ENCODE measurements at regions of chr12 and their contacts with region 1.

Region 1: DNA sequence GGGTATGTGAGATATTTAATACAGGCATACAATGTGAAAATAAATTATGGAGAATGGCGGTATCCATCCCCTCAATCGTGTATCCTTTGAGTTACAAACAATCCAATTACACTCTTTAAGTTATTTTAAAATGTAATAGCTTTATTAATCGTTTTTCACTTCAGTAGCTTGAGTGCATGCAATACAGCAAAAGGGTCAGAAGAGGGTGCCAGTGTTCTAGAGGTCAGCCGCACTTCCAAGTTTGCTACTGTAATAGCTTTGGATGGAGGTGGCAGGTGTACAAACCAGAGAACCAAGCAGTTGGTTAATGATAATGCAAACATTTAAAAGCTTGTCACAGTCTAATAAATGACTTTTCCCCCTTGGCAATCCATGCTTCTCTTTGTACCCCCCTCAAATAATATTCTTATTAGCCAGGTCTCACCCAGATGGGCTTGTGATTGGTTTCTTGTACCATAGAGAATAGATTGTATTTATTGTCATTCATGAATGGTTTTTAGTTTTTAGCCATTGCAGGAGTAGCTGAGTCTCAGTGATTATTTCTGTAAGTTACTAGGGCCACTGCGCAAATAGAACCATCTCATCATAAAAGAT is 127.0 kb downstream of the ERC1 start:
- DNase-seq: peak; percentile 31
- CTCF ChIP-seq: peak; percentile 84

Region 2: DNA sequence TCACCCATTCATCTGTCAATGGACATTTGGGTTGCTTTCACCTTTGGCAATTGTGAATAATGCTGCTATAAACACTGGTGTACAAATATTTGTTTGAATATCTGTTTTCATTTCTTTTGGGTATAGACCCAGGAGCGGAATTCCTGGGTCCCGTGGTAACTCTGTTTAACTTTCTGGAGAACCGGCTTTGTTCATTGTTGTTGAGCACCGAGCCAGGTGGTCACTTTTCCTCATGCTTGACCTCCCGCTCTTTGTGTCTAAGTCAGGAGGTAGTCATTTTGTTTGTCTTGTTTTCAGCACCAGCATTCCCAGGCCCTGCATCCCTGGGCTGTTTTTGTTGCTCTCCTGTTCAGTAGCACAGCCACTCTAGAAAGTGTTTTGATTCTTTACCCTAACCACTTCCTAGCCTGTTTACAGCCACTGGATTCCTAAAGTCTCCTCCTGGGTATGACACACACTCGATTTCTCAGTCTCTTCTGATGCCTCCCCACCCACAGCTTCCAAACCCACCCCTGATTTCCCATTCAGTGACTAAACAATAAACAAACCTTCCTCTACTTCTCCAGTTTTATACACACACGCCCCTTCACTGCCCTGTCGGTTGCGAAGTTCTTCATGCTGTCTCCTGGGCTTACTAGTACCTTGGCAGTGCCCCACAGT is 620.4 kb before region 1 on chr12:
- CTCF ChIA-PET with region 1: no interaction called
- POLR2A ChIA-PET with region 1: no interaction called
- DNase-seq: no peak
- CTCF ChIP-seq: no peak

Region 3: DNA sequence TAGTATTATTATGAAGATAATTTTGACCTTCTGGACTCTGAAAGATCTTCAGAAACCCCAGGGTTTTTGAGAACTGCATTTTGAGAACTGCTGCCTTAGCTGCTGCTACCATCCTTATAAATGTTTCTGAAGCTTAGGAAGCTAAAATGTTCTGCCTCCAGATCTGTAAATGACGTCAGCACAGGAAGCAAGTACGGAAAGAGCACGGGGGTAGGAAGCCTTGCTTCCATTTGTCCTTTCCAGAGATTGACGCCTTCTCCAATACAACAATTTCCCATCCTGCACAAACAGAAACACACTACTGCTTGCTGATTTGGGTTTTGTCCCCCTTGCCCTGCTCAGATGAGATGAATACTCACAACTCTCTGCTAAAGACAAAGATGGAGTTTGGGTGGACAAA is 186.5 kb before region 1 on chr12:
- CTCF ChIA-PET with region 1: no interaction called
- POLR2A ChIA-PET with region 1: no interaction called
- DNase-seq: no peak
- CTCF ChIP-seq: no peak

Region 4: DNA sequence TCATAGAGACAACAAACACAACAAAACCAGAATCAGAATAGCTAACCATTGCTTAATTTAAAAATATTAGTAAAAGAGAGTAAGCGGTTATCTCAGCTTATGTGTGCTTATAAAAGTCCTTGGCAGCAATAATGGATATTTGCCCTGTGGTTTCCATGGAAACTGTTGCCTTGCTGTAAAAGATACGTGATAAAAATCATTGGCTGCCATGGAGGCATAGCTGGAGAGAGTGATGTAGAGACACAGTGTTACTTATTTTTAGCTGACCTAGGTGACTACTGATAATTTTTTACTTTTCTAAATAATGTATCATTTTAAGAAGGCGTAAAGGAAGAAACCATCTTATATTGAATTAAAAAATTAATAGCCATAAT is 34.2 kb before region 1 on chr12:
- CTCF ChIA-PET with region 1: interaction called, 12 read pairs
- POLR2A ChIA-PET with region 1: no interaction called
- DNase-seq: no peak
- CTCF ChIP-seq: no peak

Region 5: GRCh38 chr12:1138691-1139090 is 20.6 kb after region 1 on chr12:
- CTCF ChIA-PET with region 1: interaction called, 14 read pairs
- POLR2A ChIA-PET with region 1: no interaction called
- DNase-seq: no peak
- CTCF ChIP-seq: no peak

Region 6: GRCh38 chr12:1544996-1545700 is 427.1 kb after region 1 on chr12:
- CTCF ChIA-PET with region 1: interaction called, 12 read pairs
- POLR2A ChIA-PET with region 1: no interaction called
- DNase-seq: no peak
- CTCF ChIP-seq: no peak

Region 7: DNA sequence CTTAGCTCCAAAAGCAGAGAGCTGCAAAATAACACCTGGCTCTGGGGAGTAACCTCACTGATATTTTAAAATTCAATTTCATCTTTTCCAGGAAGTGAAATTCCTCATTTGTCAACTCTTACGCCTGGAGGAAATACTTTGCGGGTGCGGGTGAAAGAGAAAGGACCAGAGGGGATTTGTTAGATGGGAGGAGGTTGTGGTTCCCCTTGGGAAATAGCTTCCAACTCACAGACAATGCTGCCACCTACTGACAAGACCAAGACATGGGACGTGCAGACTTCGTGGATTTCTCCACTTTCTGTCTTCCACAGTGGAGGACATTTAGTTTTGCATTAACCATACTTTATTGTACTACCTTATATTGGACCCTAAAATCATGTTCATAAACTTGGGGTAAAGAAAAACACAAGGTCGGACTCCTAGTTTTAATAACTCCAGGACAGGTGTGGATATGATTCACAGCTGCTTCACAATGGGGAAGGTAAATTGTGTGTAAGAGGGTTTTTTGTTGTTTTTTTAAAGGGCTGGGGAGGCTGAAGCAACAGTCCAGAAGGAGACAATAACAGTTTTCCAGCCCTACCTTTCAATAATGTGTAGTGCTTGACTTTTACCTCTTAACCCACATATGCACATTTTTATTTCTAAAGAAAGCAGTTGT is 465.5 kb after region 1 on chr12:
- CTCF ChIA-PET with region 1: interaction called, 129 read pairs
- POLR2A ChIA-PET with region 1: interaction called, 5 read pairs
- DNase-seq: peak; percentile 77
- CTCF ChIP-seq: peak; percentile 80

Region 8: GRCh38 chr12:1634590-1635191 is 516.6 kb after region 1 on chr12:
- CTCF ChIA-PET with region 1: interaction called, 23 read pairs
- POLR2A ChIA-PET with region 1: no interaction called
- DNase-seq: peak; percentile 70
- CTCF ChIP-seq: peak; percentile 86

Measured in GM10248 (cell line).